ENCODE measurements at regions of chr7 and their contacts with region 1.

Region 1: DNA sequence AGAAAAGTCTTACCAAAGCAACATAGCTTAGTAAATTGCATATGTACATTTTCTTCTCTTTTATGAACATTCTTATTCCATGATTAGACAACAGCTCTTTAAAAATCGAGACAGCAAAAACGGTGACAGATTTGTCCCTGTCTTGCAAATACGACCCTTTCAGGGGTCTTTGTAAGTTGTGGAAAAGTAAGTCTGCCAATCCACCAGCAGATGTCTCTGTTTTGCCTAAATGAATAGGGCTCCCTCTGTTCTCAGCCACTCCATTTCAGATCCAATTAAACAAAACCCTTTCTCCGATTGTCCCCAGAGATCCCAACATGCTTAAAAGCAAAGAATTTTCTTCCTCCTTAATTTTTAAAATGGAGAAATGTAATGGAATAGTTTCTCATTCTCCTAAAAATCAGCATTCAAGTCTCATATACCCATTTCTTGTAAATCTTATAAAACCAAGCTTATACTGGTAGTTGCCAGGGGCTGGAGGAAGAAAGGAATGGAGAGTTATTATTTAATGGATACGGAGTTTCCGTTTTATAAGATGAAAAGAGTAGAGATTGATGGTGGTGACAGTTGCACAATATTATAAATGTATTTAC is 61.0 kb upstream of the NFE2L3 start:
- H3K4me3 ChIP-seq: no peak overlapping the region
- H3K27ac ChIP-seq: no peak overlapping the region; the same call in 1 of the 2 replicates
- H3K4me1 ChIP-seq: no peaks in the 10 kb centered on the region
- CTCF ChIP-seq: peak; percentile 49

Region 2: GRCh38 chr7:25894902-25895791 is 195.9 kb before region 1 on chr7:
- CTCF ChIA-PET with region 1: interaction called, 20 read pairs
- POLR2A ChIA-PET with region 1: no interaction called
- H3K4me3 ChIP-seq: peak overlapping the region; percentile 19
- H3K27ac ChIP-seq: peak overlapping the region; percentile 16; the same call in 1 of the 2 replicates
- H3K4me1 ChIP-seq: peaks cover 5% of the 10 kb centered on the region; the same call in 1 of the 2 replicates
- CTCF ChIP-seq: peak; percentile 65

Region 3: GRCh38 chr7:26078437-26079336 is 12.3 kb before region 1 on chr7:
- CTCF ChIA-PET with region 1: interaction called, 68 read pairs
- POLR2A ChIA-PET with region 1: no interaction called
- H3K4me3 ChIP-seq: peak overlapping the region; percentile 19; the same call in 1 of the 2 replicates
- H3K27ac ChIP-seq: no peak overlapping the region
- H3K4me1 ChIP-seq: peaks cover 23% of the 10 kb centered on the region
- CTCF ChIP-seq: peak; percentile 49; the same call in 1 of the 2 replicates

Region 4: GRCh38 chr7:26180792-26181198 is 89.8 kb after region 1 on chr7:
- CTCF ChIA-PET with region 1: interaction called, 10 read pairs
- POLR2A ChIA-PET with region 1: interaction called, 3 read pairs
- H3K4me3 ChIP-seq: no peak overlapping the region
- H3K27ac ChIP-seq: no peak overlapping the region
- H3K4me1 ChIP-seq: no peaks in the 10 kb centered on the region
- CTCF ChIP-seq: no peak

Region 5: DNA sequence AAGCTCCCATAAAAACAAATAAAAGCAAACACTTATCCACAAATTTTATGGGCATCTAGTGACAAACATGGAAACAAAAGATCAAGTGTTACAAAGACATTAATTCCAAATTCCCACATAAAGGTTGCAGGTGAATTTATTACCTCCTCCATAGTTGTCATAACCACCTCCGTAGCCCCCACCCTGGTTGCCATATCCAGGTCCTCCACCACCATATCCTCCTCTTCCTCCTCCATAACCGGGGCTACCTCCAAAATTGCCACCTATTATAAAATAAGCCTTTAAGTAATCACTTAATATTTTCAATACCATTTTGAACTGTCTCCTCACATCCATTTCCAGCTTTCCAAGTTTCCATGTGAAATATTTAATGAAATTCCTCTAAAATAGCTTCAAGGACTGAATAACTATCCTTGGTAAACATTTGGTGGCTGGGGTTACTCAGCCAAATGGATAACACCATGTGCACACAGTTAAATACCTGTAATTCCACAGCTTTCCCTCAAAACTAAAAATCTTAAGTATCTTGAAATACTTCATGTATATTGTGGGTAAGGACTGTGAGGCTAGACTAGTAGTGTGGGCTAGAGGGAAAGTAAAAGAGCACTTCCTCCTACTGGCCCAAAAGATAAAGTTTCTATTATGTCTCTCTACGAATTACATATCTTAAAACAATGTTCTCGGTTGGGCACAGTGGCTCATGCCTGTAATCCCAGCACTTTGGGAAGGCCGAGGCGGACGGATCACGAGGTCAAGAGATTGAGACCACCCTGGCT is 102.6 kb after region 1 on chr7:
- CTCF ChIA-PET with region 1: interaction called, 48 read pairs
- POLR2A ChIA-PET with region 1: interaction called, 9 read pairs
- H3K4me3 ChIP-seq: no peak overlapping the region
- H3K27ac ChIP-seq: no peak overlapping the region; the same call in 1 of the 2 replicates
- H3K4me1 ChIP-seq: peaks cover 12% of the 10 kb centered on the region
- CTCF ChIP-seq: no peak

Region 6: GRCh38 chr7:26224359-26224758 is 133.3 kb after region 1 on chr7:
- CTCF ChIA-PET with region 1: no interaction called
- POLR2A ChIA-PET with region 1: no interaction called
- H3K4me3 ChIP-seq: no peak overlapping the region
- H3K27ac ChIP-seq: no peak overlapping the region
- H3K4me1 ChIP-seq: no peaks in the 10 kb centered on the region
- CTCF ChIP-seq: no peak